ENCODE measurements at regions of chr15 and their contacts with region 1.

Region 1: DNA sequence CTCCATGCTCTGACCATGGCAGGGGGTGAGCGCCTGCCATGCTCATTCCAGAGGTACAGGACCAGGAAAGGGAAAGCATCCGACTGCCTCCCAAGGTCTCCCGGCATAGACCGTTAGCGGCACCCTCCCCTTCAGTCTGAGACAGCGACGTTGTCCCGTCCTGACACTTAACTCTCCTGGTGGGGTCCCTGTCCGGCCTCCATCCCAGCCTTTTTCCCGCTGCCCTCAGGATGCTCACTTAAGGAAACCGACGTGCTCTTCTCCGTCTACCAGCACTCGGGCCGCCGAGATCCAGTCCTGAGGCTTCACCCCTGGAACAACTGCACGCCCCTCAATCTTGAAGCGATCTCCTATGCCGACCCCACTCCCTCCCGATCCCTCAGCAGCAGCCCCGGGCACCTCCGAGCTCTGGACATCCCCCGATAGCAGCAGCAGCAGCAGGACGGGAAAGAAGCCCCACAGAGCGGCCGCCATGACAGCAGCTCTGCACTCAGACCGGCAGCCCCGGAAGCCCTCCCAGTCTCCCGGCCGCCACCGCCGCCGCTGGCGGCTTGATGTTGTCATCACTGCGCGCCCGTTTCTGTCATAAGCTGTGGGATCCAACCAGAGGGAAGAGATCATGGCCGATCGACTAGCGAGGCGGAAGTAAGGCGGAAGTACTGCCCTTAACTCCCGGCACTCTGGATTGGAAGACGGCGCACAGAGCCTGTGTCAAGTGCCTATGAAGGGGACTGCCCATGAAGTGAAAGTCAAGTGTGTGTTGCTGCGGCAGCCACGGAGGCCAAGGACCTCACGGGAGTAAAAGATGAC is at the starts of genes EMC7 and PGBD4:
- DNase-seq: peak; percentile 98
- H3K4me3 ChIP-seq: peak within 1 kb of the TSS; percentile 90
- H3K27ac ChIP-seq: peak within 1 kb of the TSS; percentile 29
- H3K4me1 ChIP-seq: peaks cover 24% of the 10 kb centered on the region
- CTCF ChIP-seq: no peak
- total RNA-seq, gene EMC7: 14.7 and 15.7 TPM in 2 replicates
- total RNA-seq, gene PGBD4: 3.6 and 4.4 TPM in 2 replicates

Region 2: GRCh38 chr15:33894193-33894592 is 207.4 kb before region 1 on chr15:
- CTCF ChIA-PET with region 1: no interaction called
- POLR2A ChIA-PET with region 1: no interaction called
- intact Hi-C with region 1: no loop called
- DNase-seq: no peak
- H3K4me3 ChIP-seq: no peak overlapping the region
- H3K27ac ChIP-seq: no peak overlapping the region
- H3K4me1 ChIP-seq: no peaks in the 10 kb centered on the region
- CTCF ChIP-seq: no peak

Region 3: GRCh38 chr15:33975022-33975565 is 126.5 kb before region 1 on chr15:
- CTCF ChIA-PET with region 1: no interaction called
- POLR2A ChIA-PET with region 1: interaction called, 10 read pairs
- intact Hi-C with region 1: no loop called
- DNase-seq: peak; percentile 1
- H3K4me3 ChIP-seq: no peak overlapping the region
- H3K27ac ChIP-seq: no peak overlapping the region
- H3K4me1 ChIP-seq: no peaks in the 10 kb centered on the region
- CTCF ChIP-seq: peak; percentile 44

Region 4: DNA sequence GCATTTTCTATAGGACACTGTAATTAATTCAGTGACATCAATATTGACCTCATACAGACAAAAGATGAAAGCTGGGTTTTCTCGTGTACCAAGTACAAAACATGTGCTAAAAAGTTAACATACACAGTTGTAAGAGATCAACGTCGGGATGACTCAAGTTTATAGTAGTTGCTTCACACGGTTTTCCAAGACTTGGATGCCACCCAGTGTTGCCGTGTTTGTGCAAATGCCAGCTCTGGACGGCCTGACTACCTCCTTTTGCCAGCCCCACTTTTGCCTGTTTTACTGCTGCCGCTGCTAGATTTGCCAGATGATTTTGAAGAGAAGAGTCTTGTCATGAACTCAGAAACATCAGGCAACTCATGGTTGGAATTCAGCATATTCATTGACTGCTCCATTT is 17.5 kb before region 1 on chr15:
- CTCF ChIA-PET with region 1: no interaction called
- POLR2A ChIA-PET with region 1: no interaction called
- intact Hi-C with region 1: no loop called
- DNase-seq: no peak
- H3K4me3 ChIP-seq: no peak overlapping the region
- H3K27ac ChIP-seq: no peak overlapping the region
- H3K4me1 ChIP-seq: no peaks in the 10 kb centered on the region
- CTCF ChIP-seq: no peak

Region 5: GRCh38 chr15:34223904-34224596 is 122.5 kb after region 1 on chr15:
- CTCF ChIA-PET with region 1: interaction called, 3 read pairs
- POLR2A ChIA-PET with region 1: interaction called, 5 read pairs
- intact Hi-C with region 1: loop called (anchors 1 kb)
- DNase-seq: peak; percentile 7
- H3K4me3 ChIP-seq: peak overlapping the region; percentile 99
- H3K27ac ChIP-seq: peak overlapping the region; percentile 45
- H3K4me1 ChIP-seq: peaks cover 18% of the 10 kb centered on the region
- CTCF ChIP-seq: no peak

Region 6: DNA sequence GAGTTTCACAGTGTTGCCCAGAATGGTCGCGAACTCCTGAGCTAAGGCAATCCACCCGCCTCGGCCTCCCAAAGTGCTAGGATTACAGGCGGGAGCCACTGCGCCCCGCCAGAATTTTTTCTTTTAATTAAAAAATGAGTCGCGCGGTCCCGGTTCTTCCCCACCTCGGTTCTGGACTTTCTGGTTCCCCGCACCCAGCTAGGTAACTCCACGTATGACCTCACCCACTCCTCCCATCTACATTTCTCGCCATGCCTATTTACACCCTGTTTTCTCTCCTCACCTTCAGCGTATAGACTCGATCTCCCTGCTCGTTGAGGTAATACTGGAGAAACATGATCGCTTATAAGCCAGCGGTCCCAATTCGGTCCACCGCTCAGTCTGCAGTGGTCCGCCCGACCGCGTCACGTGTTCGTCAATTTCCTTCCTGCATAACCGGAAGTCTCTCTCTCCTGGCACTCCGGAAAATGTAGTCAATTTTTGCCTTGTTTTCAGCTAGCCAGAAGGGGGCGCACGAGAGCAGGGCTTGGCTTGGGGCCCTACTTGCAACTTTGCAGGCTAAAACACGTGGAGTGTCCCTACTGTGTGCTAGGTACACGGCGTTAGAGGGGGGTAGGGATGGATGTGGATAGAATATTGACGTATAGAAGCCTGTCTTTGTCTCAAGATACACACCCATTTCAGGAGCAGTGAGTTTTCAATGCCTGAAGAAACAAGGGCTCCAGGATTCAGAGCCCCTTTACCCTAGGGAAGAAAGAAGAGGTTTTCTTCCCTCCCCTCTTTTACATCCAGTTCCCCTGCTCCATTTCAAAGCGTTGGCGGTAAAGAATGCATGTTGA is 241.4 kb after region 1 on chr15 and contains the starts of genes NOP10 and NUTM1:
- CTCF ChIA-PET with region 1: no interaction called
- POLR2A ChIA-PET with region 1: no interaction called
- intact Hi-C with region 1: loop called (anchors 2 kb)
- DNase-seq: peak; percentile 94
- H3K4me3 ChIP-seq: peak within 1 kb of the TSS; percentile 91
- H3K27ac ChIP-seq: peak within 1 kb of the TSS; percentile 78
- H3K4me1 ChIP-seq: peaks cover 12% of the 10 kb centered on the region
- CTCF ChIP-seq: peak; percentile 87
- total RNA-seq, gene NOP10: 115 and 191 TPM in 2 replicates
- total RNA-seq, gene NUTM1: not detected in 2 replicates

Measured in OCI-LY7 (cell line).